ENCODE measurements at regions of chr22 and their contacts with region 1.

Region 1: DNA sequence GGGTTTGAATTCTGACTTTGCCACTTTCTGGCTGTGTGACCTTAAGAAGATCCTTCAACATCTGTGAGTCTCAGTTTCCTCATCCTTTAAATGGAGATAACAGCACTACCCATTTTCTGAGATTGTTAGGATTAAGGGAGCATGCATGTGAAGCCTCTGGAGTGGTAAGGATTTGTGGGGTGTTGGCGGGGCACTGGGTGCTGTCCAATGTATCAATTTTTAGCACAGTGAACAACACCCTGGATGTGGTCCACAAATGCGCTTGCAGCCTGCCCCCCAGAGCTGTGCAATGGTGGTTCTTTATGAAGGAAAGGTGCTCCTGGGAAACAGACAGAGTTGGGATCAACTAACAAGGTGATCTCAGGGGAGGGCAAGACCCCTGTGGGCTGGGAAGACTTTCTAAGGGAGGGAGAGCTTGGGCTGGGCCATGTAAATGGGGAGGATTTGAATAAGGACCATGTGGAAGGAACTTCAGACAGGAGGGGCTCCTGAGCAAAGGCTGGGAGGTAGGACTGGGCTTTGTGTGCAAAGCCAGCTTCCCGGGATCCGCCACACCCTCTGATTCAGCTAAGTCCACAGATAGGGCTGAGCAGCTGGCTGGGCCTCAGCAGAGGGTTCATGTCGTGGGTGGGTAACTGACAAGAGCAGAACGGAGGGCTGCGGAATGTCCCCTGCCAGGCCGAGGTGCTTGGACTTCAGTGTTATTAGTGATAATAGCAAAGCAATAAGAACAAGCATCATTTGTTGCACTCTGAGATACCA is 22.7 kb upstream of the RASD2 start:
- DNase-seq: peak in 1 of 2 experiments; percentile 21
- H3K4me3 ChIP-seq: no peak overlapping the region
- H3K27ac ChIP-seq: no peak overlapping the region
- H3K4me1 ChIP-seq: no peaks in the 10 kb centered on the region
- H3K27me3 ChIP-seq: peaks cover 20% of the 10 kb centered on the region
- CTCF ChIP-seq: no peak

Region 2: DNA sequence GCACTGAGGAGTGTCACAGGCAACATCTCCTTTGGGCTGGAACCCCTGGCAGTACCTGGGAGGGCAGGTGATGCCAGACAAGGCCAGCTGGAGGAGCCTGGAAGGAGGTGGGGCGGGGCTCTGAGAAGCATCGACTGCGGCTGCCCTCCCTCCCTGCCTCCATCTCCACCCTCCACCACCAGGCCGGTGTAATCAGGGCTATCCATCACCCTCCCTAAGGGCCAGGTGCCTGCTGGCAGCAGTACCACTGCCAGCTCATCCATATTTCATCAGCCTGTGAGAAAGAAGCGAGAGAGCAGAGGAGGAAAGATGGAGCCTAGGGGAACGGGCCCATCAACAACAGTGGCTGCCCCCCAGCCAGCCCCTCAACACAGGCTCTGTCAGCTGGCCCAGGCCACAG is 28.7 kb before region 1 on chr22:
- CTCF ChIA-PET with region 1: interaction called, 10 read pairs
- POLR2A ChIA-PET with region 1: no interaction called
- intact Hi-C with region 1: no loop called
- DNase-seq: peak; percentile 53 to 59
- H3K4me3 ChIP-seq: no peak overlapping the region
- H3K27ac ChIP-seq: no peak overlapping the region
- H3K4me1 ChIP-seq: peaks cover 9% of the 10 kb centered on the region; the same call in 1 of the 2 replicates
- H3K27me3 ChIP-seq: no peaks in the 10 kb centered on the region
- CTCF ChIP-seq: no peak

Measured in PC-9 (cell line).